H1 (cell line): ENCODE measurements at regions of chr3 and their contacts with region 1.

Region 1: DNA sequence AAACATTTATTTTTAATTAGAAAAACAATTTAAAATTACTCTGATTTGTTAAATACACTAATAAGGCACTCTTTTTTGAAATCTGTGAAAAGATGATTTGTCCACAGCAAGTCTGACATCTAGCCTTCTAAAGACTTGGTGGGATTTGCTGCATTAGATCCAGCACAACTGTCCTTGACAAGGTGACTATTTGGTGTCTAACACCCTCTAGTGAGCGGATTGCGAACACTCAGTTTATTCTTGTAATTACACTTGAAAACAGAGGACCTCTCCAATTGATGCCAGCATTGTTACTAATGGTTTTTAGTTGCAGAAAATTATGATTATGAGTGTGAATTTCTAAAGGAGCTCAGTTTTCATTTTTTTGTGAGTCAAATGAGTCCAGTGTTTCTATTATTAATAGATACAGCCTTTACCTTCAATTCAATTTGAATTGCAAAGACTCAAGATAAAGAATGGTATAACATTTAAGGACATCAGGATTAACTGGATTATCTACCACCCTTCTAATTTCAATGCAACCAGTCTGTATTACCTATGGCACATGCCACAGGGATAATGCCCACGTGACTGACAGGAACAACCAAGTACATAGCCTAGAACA is 29.7 kb upstream of the STRIT1 start:
- DNase-seq: peak in 1 of 2 experiments; percentile 10
- H3K4me3 ChIP-seq: no peak overlapping the region
- H3K27ac ChIP-seq: no peak overlapping the region
- H3K4me1 ChIP-seq: no peaks in the 10 kb centered on the region
- H3K27me3 ChIP-seq: no peaks in the 10 kb centered on the region
- CTCF ChIP-seq: peak in 2 of 3 experiments; percentile 77 to 82; a peak in 3 of 4 replicates
- EP300 ChIP-seq: no peak
- POLR2A ChIP-seq: no peak
- RAD21 ChIP-seq: peak; percentile 98

Region 2: GRCh38 chr3:154904328-154904727 is 418.8 kb before region 1 on chr3:
- CTCF ChIA-PET with region 1: interaction called, 28 read pairs
- POLR2A ChIA-PET with region 1: no interaction called
- DNase-seq: peak in 1 of 2 experiments; percentile 5
- H3K4me3 ChIP-seq: no peak overlapping the region
- H3K27ac ChIP-seq: no peak overlapping the region
- H3K4me1 ChIP-seq: no peaks in the 10 kb centered on the region
- H3K27me3 ChIP-seq: peaks cover 0 to 1% (median 0%) of the 10 kb centered on the region in 4 experiments; a peak in 1 of 7 replicates
- CTCF ChIP-seq: peak in 2 of 3 experiments; percentile 50 to 62; a peak in 3 of 4 replicates
- EP300 ChIP-seq: no peak
- POLR2A ChIP-seq: no peak
- RAD21 ChIP-seq: peak; percentile 66 to 69

Region 3: DNA sequence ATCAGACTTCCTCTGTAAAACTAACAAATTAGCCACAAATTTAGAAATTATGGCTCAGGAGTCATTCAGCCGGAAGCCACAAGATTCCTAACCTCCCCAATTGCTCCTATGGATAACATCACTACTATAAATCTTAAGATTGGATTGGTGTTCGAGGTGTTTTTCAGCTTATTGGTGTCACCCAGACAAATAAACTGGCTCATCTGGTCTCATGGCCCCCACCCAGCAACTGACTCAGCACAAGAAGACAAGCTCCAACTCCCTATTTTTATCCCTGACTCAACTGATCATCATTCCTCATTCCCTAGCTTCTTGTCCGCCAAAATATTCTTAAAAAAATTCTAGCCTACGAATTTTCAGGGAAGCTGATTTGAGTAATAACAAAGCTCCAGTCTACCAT is 105.4 kb after region 1 on chr3:
- CTCF ChIA-PET with region 1: no interaction called
- POLR2A ChIA-PET with region 1: no interaction called
- DNase-seq: no peak
- H3K4me3 ChIP-seq: no peak overlapping the region
- H3K27ac ChIP-seq: no peak overlapping the region
- H3K4me1 ChIP-seq: peaks cover 0 to 8% (median 0%) of the 10 kb centered on the region in 4 experiments; a peak in 1 of 7 replicates
- H3K27me3 ChIP-seq: no peaks in the 10 kb centered on the region
- CTCF ChIP-seq: no peak
- EP300 ChIP-seq: no peak
- POLR2A ChIP-seq: no peak
- RAD21 ChIP-seq: no peak